ENCODE measurements at regions of chr1 and their contacts with region 1.

Region 1: GRCh38 chr1:24254783-24255182 is 64.4 kb upstream of the GRHL3 start:
- DNase-seq: no peak
- H3K4me3 ChIP-seq: no peak overlapping the region
- H3K27ac ChIP-seq: no peak overlapping the region
- H3K4me1 ChIP-seq: no peaks in the 10 kb centered on the region
- H3K27me3 ChIP-seq: no peaks in the 10 kb centered on the region
- CTCF ChIP-seq: no peak

Region 2: GRCh38 chr1:24167008-24167407 is 87.8 kb before region 1 on chr1:
- CTCF ChIA-PET with region 1: no interaction called
- dilution Hi-C with region 1: loop called (anchors 5 kb)
- in situ Hi-C with region 1: no loop called
- intact Hi-C with region 1: no loop called
- DNase-seq: no peak
- H3K4me3 ChIP-seq: no peak overlapping the region
- H3K27ac ChIP-seq: no peak overlapping the region
- H3K4me1 ChIP-seq: no peaks in the 10 kb centered on the region
- H3K27me3 ChIP-seq: no peaks in the 10 kb centered on the region
- CTCF ChIP-seq: no peak